Naive thymus-derived CD4-positive, alpha-beta T cell (primary cell): ENCODE measurements at regions of chr16 and their contacts with region 1.

Region 1: DNA sequence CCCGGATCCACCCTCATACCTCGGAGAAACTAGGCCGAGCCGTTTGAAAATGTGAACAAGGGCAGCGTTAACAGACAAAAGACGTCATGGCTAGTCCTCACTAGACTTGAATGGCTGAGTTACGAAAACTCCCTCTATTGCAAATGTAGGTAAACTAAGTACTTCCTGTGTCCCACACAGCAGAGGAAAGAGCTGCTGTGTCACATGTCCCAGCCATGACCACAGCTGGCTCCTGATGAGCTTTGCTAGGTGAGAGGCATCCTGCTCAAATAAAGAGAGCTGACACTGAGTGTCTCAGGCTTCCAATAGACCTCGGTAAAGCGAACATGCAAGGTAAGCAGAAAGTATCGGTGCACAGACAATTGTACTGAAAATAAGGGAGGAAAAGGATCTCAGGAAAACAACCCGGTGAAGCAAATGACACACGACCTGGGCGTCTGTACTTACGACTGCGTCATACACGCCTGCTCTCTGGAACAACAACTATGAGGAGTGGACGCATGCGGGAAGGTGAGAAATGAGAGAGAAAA is 26.0 kb downstream of the TMEM204 start:
- DNase-seq: peak in 7 of 9 donors; percentile 34 to 65 (median 50)
- ATAC-seq: peak; percentile 77
- H3K4me3 ChIP-seq: no peak overlapping the region
- H3K4me3 Mint-ChIP-seq: peak overlapping the region; percentile 12 to 85 (median 68)
- H3K27ac ChIP-seq: peak overlapping the region; percentile 57
- H3K27ac Mint-ChIP-seq: peak overlapping the region; percentile 39 to 91 (median 84)
- H3K4me1 ChIP-seq: peaks cover 20 to 45% of the 10 kb centered on the region in 2 donors
- H3K4me1 Mint-ChIP-seq: peaks cover 19 to 50% (median 42%) of the 10 kb centered on the region in 7 donors
- H3K27me3 ChIP-seq: no peaks in the 10 kb centered on the region
- H3K27me3 Mint-ChIP-seq: no peaks in the 10 kb centered on the region

Region 2: DNA sequence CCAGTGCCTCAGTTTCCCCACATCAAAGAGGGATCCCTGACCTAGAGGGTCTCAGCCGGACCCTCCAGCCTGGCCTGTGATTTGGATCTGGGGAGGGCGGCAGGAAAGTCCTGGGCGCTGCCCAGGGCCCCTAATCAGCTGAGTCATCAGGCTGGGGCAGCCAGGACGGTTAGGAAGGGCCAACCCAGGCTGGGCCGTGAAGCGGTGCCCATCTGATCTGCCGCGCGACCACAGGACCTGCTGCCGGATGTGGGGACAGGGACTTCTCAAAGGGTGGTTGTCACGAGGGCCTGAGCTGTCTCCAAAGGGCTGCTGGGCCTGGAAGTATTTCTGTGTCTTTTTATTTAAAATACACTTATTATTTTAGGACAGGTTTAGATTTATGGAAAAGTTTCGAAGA is 314.6 kb before region 1 on chr16:
- CTCF ChIA-PET with region 1: no interaction called
- POLR2A ChIA-PET with region 1: no interaction called
- intact Hi-C with region 1: no loop called
- DNase-seq: no peak
- ATAC-seq: peak; percentile 67
- H3K4me3 ChIP-seq: no peak overlapping the region
- H3K4me3 Mint-ChIP-seq: no peak overlapping the region
- H3K27ac ChIP-seq: no peak overlapping the region
- H3K27ac Mint-ChIP-seq: no peak overlapping the region
- H3K4me1 ChIP-seq: no peaks in the 10 kb centered on the region
- H3K4me1 Mint-ChIP-seq: peaks cover 0 to 9% (median 4%) of the 10 kb centered on the region in 7 donors
- H3K27me3 ChIP-seq: no peaks in the 10 kb centered on the region
- H3K27me3 Mint-ChIP-seq: peaks cover 5 to 14% (median 12%) of the 10 kb centered on the region in 5 donors

Region 3: DNA sequence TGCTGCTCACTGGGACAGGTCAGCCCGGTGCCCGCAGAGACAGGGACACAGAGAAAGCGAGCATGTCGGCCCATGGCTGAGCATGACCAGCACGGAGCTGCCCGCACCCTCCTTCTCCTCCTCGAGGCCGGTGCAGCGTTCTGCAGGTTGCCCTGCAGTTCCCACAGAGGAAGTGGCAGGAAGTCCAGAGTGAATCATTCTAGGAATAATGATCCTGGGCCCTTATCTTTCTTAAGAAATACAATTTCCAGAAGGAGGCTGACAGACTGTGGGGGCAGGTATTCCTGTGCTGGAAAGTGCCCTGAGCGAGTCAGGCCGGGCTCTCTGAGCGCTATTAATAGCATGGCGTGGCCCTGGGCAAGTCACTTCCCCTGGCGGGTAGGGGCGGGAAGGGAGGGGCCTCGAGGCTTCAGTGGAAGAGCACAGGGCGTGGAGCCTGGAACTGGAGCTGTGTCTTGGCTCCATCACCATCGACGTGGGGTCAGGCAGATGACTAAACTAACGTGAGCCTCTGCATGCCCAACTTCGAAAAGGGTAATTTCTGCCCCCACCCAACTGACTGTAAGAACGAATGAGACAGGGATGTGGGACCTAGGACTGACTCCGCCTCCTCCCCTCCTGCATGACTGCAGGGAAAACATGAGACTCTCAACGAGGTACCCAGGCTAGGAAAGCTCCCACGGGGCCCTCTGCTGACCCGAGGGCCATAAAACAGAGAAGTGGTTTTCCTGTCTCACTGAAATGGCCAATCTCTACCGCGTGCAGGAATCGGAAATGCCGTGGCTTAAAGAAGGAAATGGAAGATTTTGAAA is 16.2 kb before region 1 on chr16:
- CTCF ChIA-PET with region 1: interaction called, 4 read pairs
- POLR2A ChIA-PET with region 1: interaction called, 27 read pairs
- intact Hi-C with region 1: no loop called
- DNase-seq: peak in 5 of 9 donors; percentile 23 to 59 (median 38)
- ATAC-seq: peak; percentile 81
- H3K4me3 ChIP-seq: no peak overlapping the region
- H3K4me3 Mint-ChIP-seq: peak overlapping the region; percentile 70 to 86 (median 76)
- H3K27ac ChIP-seq: peak overlapping the region; percentile 51
- H3K27ac Mint-ChIP-seq: peak overlapping the region; percentile 71 to 95 (median 86)
- H3K4me1 ChIP-seq: peaks cover 13 to 70% of the 10 kb centered on the region in 2 donors
- H3K4me1 Mint-ChIP-seq: peaks cover 51 to 89% (median 66%) of the 10 kb centered on the region in 7 donors
- H3K27me3 ChIP-seq: no peaks in the 10 kb centered on the region
- H3K27me3 Mint-ChIP-seq: no peaks in the 10 kb centered on the region

Region 4: GRCh38 chr16:1571022-1571671 is 11.6 kb after region 1 on chr16:
- CTCF ChIA-PET with region 1: no interaction called
- POLR2A ChIA-PET with region 1: no interaction called
- intact Hi-C with region 1: loop called in 1 of 2 experiments (anchors 1 kb)
- DNase-seq: no peak
- ATAC-seq: no peak
- H3K4me3 ChIP-seq: no peak overlapping the region
- H3K4me3 Mint-ChIP-seq: no peak overlapping the region
- H3K27ac ChIP-seq: no peak overlapping the region
- H3K27ac Mint-ChIP-seq: peak overlapping the region in 2 of 9 donors; percentile 23 to 40
- H3K4me1 ChIP-seq: no peaks in the 10 kb centered on the region
- H3K4me1 Mint-ChIP-seq: peaks cover 0 to 12% (median 0%) of the 10 kb centered on the region in 7 donors
- H3K27me3 ChIP-seq: no peaks in the 10 kb centered on the region
- H3K27me3 Mint-ChIP-seq: no peaks in the 10 kb centered on the region